ENCODE measurements at regions of chr6 and their contacts with region 1.

Region 1: GRCh38 chr6:79864001-79864400 is 83.4 kb downstream of the ELOVL4 start:
- DNase-seq: no peak

Region 2: DNA sequence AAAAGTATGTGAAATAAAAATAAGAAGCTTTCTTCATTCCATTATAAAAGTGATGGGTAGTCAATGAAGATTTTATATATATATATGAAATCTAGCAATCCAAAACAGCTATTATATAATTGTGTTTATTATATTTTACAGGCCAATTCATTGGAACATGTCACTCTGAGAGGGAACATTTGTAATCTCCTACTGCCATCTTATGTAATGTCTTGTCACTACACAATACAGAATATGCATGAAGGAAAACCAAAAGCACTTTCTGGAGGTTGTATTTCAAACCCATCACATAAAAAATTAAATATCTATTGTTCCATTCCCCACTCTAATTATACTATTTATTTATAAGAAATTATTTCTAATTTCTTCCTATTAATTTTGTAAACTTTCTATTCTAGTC is 1028.2 kb before region 1 on chr6:
- intact Hi-C with region 1: no loop called
- DNase-seq: no peak

Region 3: GRCh38 chr6:79894939-79895338 is 30.9 kb after region 1 on chr6:
- intact Hi-C with region 1: loop called in 1 of 2 experiments (anchors 2 kb)
- DNase-seq: no peak

Measured in posterior vena cava (tissue), 2 donors.